PC-3 (cell line): ENCODE measurements at regions of chr10 and their contacts with region 1.

Region 1: DNA sequence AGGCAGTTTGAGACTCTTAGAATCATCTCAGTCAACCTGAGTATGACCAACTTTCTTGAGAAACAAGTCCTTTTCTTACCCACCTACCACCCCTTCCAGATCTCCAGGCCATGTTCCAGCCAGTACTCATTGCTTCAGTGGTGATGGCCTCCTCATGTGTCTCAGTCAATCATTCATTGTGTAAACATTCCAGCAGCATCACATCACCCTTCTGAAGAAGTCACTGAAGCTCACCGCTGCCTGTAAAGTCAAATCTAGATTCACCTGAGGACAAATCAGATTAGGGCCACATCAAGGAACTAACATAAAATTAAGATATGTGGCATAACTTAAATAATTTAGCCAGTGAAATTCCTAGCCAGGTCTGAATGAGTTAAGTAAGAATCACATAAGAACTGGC is 467.3 kb upstream of the NRP1 start:
- DNase-seq: peak; percentile 100
- ATAC-seq: peak; percentile 77
- H3K4me3 ChIP-seq: no peak overlapping the region
- H3K27ac ChIP-seq: peak overlapping the region; percentile 61
- H3K4me1 ChIP-seq: peaks cover 55% of the 10 kb centered on the region
- H3K27me3 ChIP-seq: no peaks in the 10 kb centered on the region
- CTCF ChIP-seq: no peak

Region 2: DNA sequence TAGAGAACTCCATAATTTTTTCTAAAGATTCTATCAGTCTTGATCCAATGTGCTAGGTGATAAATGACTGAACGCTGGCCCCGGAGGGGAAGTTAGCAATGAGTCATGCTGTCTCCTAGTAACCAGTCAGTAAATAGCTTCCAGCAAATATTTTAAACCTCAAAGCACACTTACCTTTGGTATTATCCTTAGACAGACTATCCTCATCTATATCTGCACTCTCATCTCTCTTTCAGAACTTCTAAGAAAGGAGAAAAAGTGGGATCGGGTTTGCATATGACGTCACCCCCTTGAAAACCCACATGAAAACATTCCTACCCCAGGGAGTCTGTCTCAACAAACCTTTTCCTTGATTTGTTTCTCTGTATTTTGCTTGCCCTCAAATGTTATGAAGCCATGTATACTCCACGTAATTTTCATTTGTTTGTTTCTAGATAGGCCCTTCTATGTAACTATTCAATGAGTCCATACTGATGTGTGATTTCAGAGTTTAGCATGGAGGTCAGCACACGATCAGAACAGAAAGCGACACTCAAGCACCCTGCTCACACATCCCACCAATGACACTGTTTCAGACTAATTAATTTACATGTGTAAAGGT is 292.4 kb before region 1 on chr10:
- CTCF ChIA-PET with region 1: no interaction called
- POLR2A ChIA-PET with region 1: no interaction called
- intact Hi-C with region 1: loop called (anchors 2 kb)
- DNase-seq: peak; percentile 100
- ATAC-seq: peak; percentile 97
- H3K4me3 ChIP-seq: peak overlapping the region; percentile 41
- H3K27ac ChIP-seq: peak overlapping the region; percentile 65
- H3K4me1 ChIP-seq: peaks cover 28% of the 10 kb centered on the region
- H3K27me3 ChIP-seq: no peaks in the 10 kb centered on the region
- CTCF ChIP-seq: no peak

Region 3: GRCh38 chr10:33609546-33609945 is 192.2 kb before region 1 on chr10:
- CTCF ChIA-PET with region 1: no interaction called
- POLR2A ChIA-PET with region 1: no interaction called
- intact Hi-C with region 1: loop called (anchors 2 kb)
- DNase-seq: peak; percentile 98
- ATAC-seq: peak; percentile 99
- H3K4me3 ChIP-seq: peak overlapping the region; percentile 1; the same call in 1 of the 2 replicates
- H3K27ac ChIP-seq: peak overlapping the region; percentile 41
- H3K4me1 ChIP-seq: peaks cover 19% of the 10 kb centered on the region
- H3K27me3 ChIP-seq: no peaks in the 10 kb centered on the region
- CTCF ChIP-seq: no peak

Region 4: DNA sequence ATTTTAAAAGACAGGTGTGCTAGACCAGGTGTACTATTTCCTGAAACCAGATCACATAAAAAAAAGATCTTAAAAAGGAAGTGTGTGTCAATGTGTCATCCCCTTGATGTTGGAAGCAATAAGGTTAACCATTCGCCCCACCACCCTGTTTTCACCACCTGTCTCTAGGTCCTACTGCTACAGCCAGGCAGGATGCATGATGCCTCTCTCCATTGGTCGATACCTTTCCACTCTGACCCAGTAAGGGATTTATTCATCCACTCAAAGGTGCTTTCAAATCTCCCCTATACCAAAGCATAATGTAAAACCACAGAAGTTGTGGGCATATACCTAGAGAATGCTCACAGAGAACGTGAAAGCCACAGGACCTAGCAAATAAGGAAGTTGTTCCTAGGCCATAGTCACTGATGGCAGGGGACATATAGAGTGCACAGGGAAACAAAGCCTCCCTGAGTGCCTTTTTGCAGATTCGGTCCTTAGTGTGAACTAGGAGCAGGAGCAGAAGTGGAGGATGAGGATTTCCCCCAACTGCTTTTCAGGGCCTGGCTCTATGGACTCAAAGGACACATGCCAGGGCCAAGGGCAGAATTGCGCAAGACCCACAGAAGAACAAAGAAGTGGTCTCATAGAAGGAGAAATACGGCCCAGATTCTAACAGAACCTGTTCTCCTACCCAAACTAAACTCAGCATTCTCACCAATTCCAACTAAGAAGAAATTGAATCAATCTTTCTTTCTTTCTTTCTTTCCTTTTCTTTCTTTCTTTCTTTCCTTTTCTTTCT is 164.2 kb after region 1 on chr10:
- CTCF ChIA-PET with region 1: no interaction called
- POLR2A ChIA-PET with region 1: no interaction called
- intact Hi-C with region 1: loop called (anchors 1 kb)
- DNase-seq: no peak
- ATAC-seq: no peak
- H3K4me3 ChIP-seq: no peak overlapping the region
- H3K27ac ChIP-seq: no peak overlapping the region
- H3K4me1 ChIP-seq: peaks cover 12% of the 10 kb centered on the region
- H3K27me3 ChIP-seq: no peaks in the 10 kb centered on the region
- CTCF ChIP-seq: no peak

Region 5: GRCh38 chr10:34187201-34187600 is 385.5 kb after region 1 on chr10:
- CTCF ChIA-PET with region 1: no interaction called
- POLR2A ChIA-PET with region 1: no interaction called
- intact Hi-C with region 1: loop called (anchors 5 kb)
- DNase-seq: no peak
- ATAC-seq: no peak
- H3K4me3 ChIP-seq: no peak overlapping the region
- H3K27ac ChIP-seq: no peak overlapping the region
- H3K4me1 ChIP-seq: peaks cover 19% of the 10 kb centered on the region
- H3K27me3 ChIP-seq: no peaks in the 10 kb centered on the region
- CTCF ChIP-seq: no peak

Region 6: DNA sequence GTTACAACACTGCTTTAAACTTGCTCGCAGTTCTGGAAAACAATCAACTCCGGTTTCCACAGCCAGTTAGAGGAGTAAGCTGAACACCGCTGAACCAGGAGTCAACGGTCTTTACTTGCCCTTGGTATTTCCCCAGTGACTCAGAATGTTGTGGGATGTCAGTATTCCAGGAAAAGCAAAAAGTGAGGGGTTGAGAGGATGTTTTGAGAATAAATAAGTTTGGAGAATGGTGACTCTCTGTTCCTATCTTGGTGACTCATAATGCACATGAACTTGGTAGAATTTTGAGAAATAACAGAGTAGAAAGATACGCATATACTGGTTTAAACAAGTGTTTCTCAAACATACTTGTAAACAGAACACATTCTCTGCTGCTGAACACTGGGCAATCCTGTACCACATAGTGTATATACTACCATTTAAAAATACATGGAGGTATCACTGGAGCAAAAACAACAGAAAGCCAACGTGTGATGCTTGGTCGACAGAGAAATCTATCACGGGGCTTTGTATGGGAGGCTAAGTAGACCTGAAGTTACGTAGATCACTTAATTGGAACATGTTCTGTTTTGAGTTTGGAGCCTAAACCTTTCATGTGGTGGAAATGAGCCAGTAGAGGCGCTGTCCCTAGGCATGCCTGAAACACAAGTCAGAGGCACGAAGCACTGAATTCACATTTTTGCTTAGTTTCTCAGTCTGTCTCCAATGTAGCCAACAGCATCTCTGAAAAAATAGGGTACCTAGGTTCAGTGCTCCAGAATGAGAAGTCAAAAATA is 479.0 kb after region 1 on chr10:
- CTCF ChIA-PET with region 1: no interaction called
- POLR2A ChIA-PET with region 1: no interaction called
- intact Hi-C with region 1: loop called (anchors 2 kb)
- DNase-seq: peak; percentile 100
- ATAC-seq: peak; percentile 99
- H3K4me3 ChIP-seq: peak overlapping the region; percentile 35; the same call in 1 of the 2 replicates
- H3K27ac ChIP-seq: peak overlapping the region; percentile 54
- H3K4me1 ChIP-seq: peaks cover 22% of the 10 kb centered on the region
- H3K27me3 ChIP-seq: no peaks in the 10 kb centered on the region
- CTCF ChIP-seq: peak; percentile 40; the same call in 1 of the 2 replicates